GM13977 (cell line): ENCODE measurements at regions of chr5 and their contacts with region 1.

Region 1: DNA sequence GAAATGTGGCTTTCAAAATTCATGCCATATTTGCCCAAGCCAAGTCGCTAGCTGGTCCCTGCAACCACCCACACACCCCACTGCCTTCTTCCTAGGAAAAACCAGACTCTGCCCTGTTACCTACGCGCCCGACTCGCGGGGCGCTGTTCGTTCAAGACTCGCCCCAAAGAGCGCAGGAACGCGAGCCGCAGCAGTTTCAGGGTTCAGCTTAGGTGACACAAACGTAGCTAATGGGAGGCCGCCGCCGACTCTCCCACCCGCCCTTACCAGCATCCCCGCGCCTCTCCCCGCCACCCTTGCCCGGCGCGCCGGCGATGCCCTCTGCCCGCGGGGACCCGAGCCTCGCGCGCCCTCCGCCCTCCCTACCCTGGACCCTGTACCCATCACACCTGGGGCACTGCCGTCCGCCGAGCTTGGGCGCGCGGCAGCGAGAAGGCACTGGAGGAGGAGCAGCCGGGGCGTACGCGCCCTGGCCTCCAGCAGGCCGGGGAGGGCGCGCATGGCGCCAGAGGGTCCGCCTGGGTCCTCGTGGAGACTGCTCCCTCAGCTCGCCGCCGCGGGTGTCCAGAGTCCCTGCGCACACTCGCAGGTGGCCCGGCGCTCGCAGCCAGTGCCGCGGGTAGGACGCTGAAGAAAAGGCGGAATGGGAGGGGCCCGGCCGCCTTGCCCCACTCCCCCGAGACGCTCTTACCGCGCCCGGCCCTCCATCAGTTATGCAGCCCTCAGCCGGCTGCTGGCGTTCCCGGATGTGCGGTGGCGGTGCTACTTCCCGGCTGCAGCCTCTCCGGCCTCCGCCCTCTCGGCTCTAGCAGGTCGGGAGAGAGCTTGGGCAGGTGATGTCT is at the start of gene EMB:
- DNase-seq: peak; percentile 56
- CTCF ChIP-seq: peak; percentile 57

Region 2: DNA sequence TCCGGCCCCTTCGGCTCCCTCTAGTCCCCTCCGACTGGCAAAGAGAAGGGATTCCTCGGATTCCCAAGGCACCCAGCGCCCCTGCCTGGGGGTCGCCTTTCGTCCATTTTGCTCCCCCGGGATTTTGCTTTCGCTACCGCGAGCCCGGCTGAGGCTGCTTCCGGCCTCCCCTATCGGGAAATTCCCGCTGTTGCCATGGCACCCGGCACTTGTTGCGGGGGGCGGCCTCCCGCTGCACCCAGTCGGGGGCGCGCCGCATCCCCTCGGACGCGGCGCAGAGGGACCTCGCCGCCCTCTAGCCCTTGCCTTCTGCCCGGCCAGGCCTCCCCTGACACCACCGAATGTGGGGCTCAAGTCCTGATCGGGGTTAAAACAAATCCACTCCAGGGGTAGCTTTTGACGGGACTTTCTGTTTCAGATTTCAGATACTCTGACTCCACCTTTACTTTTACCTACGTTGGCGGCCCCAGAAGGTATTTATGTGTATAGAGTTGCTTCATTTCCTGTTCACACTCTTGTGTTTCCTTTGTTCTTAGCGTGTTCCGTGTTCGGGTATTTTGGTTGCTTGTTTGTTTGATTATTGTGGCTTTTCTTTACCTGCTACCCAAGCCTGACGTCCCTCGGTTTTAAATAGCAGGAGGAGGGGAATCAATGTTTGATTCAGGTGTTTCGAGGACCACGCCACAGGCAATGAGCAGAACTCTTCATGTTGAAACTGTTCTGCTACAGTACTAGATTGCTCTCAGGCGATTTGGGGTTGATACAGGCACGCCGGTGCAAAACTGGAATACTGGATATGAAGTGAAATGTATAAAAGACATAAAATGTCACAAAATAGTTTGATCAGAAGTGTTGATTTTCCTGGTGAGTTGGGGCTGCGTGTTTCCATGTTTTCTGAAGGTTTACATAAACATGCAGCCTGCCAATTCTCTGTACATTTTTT is 227.1 kb after region 1 on chr5:
- in situ Hi-C with region 1: loop called (anchors 25 kb)
- DNase-seq: peak; percentile 78
- CTCF ChIP-seq: peak; percentile 19